Activated CD8-positive, alpha-beta T cell treated with anti-CD3 and anti-CD28 coated beads, Interleukin-2, amount 10 ng/mL, durations not matched to agents 7 days and 5 days (primary cell): ENCODE measurements at regions of chr2 and their contacts with region 1.

Region 1: GRCh38 chr2:98771721-98772524 is 41.0 kb upstream of the MGAT4A start:
- DNase-seq: peak; percentile 84
- ATAC-seq: peak; percentile 71
- H3K4me3 Mint-ChIP-seq: peak overlapping the region; percentile 94
- H3K27ac Mint-ChIP-seq: peak overlapping the region; percentile 97
- H3K4me1 Mint-ChIP-seq: peaks cover 71% of the 10 kb centered on the region
- H3K27me3 Mint-ChIP-seq: no peaks in the 10 kb centered on the region

Region 2: DNA sequence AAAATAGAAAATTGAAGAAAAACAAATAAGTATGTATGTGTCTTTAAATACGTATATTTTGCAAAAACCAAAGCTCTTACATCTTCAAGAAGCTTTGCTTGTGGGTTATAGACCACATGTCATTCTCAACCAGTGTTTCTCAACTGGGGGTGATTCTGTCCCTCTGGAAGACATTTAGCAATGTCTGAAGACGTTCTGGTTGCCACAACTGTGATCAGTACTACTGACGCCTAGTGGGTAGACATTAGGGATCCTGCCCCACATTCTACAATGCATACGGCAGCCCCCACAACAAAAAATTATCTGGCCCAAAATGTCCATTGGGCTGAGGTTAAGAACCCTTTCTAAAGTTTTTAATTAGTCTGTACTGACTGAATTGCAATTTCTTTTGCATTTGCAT is 115.1 kb before region 1 on chr2:
- CTCF ChIA-PET with region 1: interaction called, 16 read pairs
- POLR2A ChIA-PET with region 1: interaction called, 10 read pairs
- DNase-seq: peak; percentile 69
- ATAC-seq: peak; percentile 71
- H3K4me3 Mint-ChIP-seq: peak overlapping the region; percentile 57
- H3K27ac Mint-ChIP-seq: peak overlapping the region; percentile 87
- H3K4me1 Mint-ChIP-seq: peaks cover 86% of the 10 kb centered on the region
- H3K27me3 Mint-ChIP-seq: no peaks in the 10 kb centered on the region

Region 3: DNA sequence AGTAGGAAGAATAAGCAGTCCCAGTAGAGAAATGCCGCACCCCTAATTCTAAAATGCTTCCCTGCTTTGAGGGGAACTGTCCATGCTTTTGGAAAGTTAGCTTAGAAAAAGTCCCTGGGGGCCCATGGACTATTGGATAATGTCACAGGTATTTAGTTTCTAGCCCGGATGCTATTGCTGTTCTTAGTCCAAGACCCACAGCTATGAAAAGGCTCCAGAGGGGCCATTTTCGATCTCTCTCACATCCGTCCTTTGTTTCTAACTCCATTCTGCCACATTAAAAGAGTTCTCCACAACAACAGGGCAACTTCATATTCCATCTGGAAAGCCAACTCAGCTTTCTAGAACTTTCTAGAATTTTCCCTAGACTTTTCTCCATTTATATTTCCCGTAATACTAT is 88.2 kb before region 1 on chr2:
- CTCF ChIA-PET with region 1: no interaction called
- POLR2A ChIA-PET with region 1: no interaction called
- DNase-seq: no peak
- ATAC-seq: no peak
- H3K4me3 Mint-ChIP-seq: no peak overlapping the region
- H3K27ac Mint-ChIP-seq: peak overlapping the region; percentile 39
- H3K4me1 Mint-ChIP-seq: peaks cover 32% of the 10 kb centered on the region
- H3K27me3 Mint-ChIP-seq: no peaks in the 10 kb centered on the region

Region 4: DNA sequence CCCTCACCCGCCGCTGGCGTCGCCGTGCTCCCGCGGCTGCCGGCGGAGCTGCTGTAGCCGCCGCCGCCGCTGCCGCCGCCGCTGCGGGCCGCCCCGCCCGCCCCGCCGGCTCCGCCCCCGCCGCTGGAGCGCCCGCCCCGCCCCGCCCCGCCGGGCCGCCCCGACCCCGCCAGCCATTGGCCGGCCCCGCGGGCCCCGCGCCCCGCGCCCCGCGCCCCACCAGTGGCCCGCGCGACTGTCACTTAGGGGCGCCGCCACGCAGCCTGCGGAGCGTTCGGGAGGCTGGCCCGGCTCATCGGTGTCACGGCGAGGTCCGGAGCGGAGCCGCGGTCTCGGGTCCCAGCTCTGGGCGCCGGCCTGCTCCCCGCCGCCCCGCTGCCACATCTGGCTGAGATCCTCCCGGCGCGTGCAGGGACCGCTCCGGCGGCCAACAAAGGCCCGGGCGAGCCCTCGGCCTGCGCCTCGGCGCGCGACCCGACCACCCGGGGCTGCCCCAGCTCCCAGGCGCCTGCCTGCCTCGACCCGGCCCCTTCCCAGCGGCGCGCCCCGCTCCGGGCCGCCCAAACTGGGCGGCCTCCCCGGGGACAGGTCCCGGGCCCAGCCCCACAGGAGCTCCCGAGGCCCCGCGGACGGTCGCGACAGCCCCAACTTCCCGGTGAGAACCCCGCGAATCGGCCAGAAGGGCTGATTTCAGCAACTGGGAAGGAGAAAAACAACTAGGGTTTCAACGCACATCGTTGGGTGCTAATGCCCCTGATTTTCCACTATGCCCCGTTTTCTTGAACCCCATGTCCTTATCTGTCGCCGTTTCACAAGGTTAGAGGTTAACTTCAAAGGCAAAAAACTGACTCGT is 40.7 kb before region 1 on chr2 and contains the start of gene MGAT4A:
- CTCF ChIA-PET with region 1: interaction called, 67 read pairs
- POLR2A ChIA-PET with region 1: interaction called, 128 read pairs
- DNase-seq: peak; percentile 81
- ATAC-seq: peak; percentile 85
- H3K4me3 Mint-ChIP-seq: peak within 1 kb of the TSS; percentile 92
- H3K27ac Mint-ChIP-seq: peak within 1 kb of the TSS; percentile 90
- H3K4me1 Mint-ChIP-seq: peaks cover 64% of the 10 kb centered on the region
- H3K27me3 Mint-ChIP-seq: no peaks in the 10 kb centered on the region
- total RNA-seq, gene MGAT4A: 73.4 to 76.2 TPM

Region 5: DNA sequence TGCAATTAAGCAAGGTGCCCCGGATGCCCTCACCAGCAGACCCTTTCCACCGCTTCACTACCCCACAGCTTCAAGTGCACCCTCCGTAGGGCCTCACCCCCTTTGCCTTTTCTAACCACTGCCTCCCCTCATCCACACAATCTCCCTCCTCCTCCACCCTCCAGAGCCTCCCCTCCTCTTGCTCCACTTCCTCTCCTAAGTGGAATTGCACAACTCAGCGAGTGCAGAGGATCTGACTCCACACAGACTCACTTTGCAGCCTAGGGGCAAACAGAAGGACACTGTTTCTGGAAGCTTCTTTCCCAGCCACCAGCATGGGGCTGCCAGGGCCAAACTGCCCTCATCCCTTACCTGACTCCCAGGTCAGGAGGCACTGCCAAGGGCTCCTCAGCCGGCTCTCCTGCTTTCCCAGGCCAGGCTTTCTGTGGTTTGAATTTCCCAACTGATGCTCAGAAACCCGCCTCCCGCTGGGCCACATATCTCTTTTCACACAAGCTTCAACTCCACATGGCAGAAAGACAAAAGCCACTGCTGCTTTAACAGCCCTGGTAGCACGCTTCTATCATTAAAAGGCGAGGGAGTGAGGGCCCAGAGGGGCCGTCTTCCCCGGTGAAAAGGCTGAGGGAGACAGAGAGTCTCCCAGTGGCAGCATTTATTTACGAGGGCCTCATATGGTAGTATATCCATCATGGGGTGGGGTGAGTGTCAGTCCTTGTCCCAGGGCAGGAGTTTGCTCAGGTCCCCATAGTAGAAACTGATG is 33.7 kb after region 1 on chr2:
- CTCF ChIA-PET with region 1: interaction called, 3 read pairs
- POLR2A ChIA-PET with region 1: interaction called, 13 read pairs
- DNase-seq: no peak
- ATAC-seq: no peak
- H3K4me3 Mint-ChIP-seq: no peak overlapping the region
- H3K27ac Mint-ChIP-seq: no peak overlapping the region
- H3K4me1 Mint-ChIP-seq: peaks cover 24% of the 10 kb centered on the region
- H3K27me3 Mint-ChIP-seq: peaks cover 10% of the 10 kb centered on the region

Region 6: GRCh38 chr2:98835831-98836385 is 64.0 kb after region 1 on chr2:
- CTCF ChIA-PET with region 1: interaction called, 10 read pairs
- POLR2A ChIA-PET with region 1: interaction called, 4 read pairs
- DNase-seq: peak; percentile 71
- ATAC-seq: peak; percentile 79
- H3K4me3 Mint-ChIP-seq: peak overlapping the region; percentile 37
- H3K27ac Mint-ChIP-seq: peak overlapping the region; percentile 71
- H3K4me1 Mint-ChIP-seq: peaks cover 50% of the 10 kb centered on the region
- H3K27me3 Mint-ChIP-seq: peaks cover 5% of the 10 kb centered on the region

Region 7: GRCh38 chr2:99032786-99033185 is 260.9 kb after region 1 on chr2:
- CTCF ChIA-PET with region 1: no interaction called
- POLR2A ChIA-PET with region 1: no interaction called
- DNase-seq: no peak
- ATAC-seq: no peak
- H3K4me3 Mint-ChIP-seq: no peak overlapping the region
- H3K27ac Mint-ChIP-seq: no peak overlapping the region
- H3K4me1 Mint-ChIP-seq: peaks cover 13% of the 10 kb centered on the region
- H3K27me3 Mint-ChIP-seq: peaks cover 3% of the 10 kb centered on the region